Caco-2 (cell line): ENCODE measurements at regions of chr2 and their contacts with region 1.

Region 1: GRCh38 chr2:241217320-241218031 is 29.0 kb downstream of the ANO7 start:
- DNase-seq: peak; percentile 74 to 81
- H3K4me3 ChIP-seq: peak overlapping the region; percentile 69
- H3K4me3 Mint-ChIP-seq: peak overlapping the region; percentile 77
- H3K27ac Mint-ChIP-seq: peak overlapping the region; percentile 81
- H3K4me1 ChIP-seq: no peaks in the 10 kb centered on the region
- H3K4me1 Mint-ChIP-seq: peaks cover 10% of the 10 kb centered on the region
- H3K27me3 ChIP-seq: no peaks in the 10 kb centered on the region
- H3K27me3 Mint-ChIP-seq: no peaks in the 10 kb centered on the region
- CTCF ChIP-seq: no peak

Region 2: GRCh38 chr2:241149925-241150659 is 67.4 kb before region 1 on chr2 and contains the start of gene PPP1R7:
- CTCF ChIA-PET with region 1: no interaction called
- POLR2A ChIA-PET with region 1: no interaction called
- intact Hi-C with region 1: loop called (anchors 5 kb)
- DNase-seq: peak; percentile 90 to 93
- H3K4me3 ChIP-seq: peak within 1 kb of the TSS; percentile 53
- H3K4me3 Mint-ChIP-seq: peak within 1 kb of the TSS; percentile 84
- H3K27ac Mint-ChIP-seq: peak within 1 kb of the TSS; percentile 87
- H3K4me1 ChIP-seq: 0 out of 2 replicates have a peak, but pooled peaks cover 3% of the 10 kb centered on the region
- H3K4me1 Mint-ChIP-seq: peaks cover 16% of the 10 kb centered on the region
- H3K27me3 ChIP-seq: no peaks in the 10 kb centered on the region
- H3K27me3 Mint-ChIP-seq: no peaks in the 10 kb centered on the region
- CTCF ChIP-seq: no peak
- total RNA-seq, gene PPP1R7: 30.0 and 32.5 TPM in 2 replicates

Region 3: DNA sequence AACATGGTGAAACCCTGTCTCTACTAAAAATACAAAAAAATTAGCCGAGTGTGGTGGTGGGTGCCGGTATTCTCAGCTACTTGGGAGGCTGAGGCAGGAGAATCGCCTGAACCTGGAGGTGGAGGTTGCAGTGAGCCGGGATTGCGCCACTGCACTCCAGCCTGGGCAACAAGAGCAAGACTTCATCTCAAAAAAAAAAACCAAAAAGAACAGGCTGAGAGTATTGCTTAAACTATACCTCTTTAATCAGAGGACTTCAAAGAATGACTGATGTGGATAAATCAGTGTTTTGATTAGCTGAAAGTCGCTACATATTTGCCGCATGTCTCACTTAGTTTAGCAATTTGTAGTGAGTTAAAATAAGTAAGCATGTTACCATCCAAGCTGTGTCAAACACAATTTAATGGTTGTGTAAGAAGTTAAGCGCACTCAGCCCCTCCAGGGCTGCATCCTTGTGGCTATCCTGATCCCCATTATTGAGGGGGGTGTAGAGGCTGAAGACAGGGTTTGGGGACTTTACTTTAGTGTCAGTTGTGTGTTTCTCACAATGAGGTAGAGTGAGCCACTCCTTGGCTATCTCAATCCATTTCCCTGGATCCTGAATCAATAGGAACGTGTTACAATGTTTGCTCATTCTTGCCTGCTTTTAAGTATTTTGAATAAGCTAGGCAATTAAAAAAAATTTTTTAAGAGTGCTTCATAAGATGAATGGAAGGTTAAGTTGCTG is 127.6 kb after region 1 on chr2:
- CTCF ChIA-PET with region 1: no interaction called
- POLR2A ChIA-PET with region 1: no interaction called
- intact Hi-C with region 1: no loop called
- DNase-seq: no peak
- H3K4me3 ChIP-seq: no peak overlapping the region
- H3K4me3 Mint-ChIP-seq: no peak overlapping the region
- H3K27ac Mint-ChIP-seq: no peak overlapping the region
- H3K4me1 ChIP-seq: peaks cover 3% of the 10 kb centered on the region
- H3K4me1 Mint-ChIP-seq: peaks cover 12% of the 10 kb centered on the region
- H3K27me3 ChIP-seq: no peaks in the 10 kb centered on the region
- H3K27me3 Mint-ChIP-seq: no peaks in the 10 kb centered on the region
- CTCF ChIP-seq: no peak